HEK293 (cell line): ENCODE measurements at regions of chr1 and their contacts with region 1.

Region 1: DNA sequence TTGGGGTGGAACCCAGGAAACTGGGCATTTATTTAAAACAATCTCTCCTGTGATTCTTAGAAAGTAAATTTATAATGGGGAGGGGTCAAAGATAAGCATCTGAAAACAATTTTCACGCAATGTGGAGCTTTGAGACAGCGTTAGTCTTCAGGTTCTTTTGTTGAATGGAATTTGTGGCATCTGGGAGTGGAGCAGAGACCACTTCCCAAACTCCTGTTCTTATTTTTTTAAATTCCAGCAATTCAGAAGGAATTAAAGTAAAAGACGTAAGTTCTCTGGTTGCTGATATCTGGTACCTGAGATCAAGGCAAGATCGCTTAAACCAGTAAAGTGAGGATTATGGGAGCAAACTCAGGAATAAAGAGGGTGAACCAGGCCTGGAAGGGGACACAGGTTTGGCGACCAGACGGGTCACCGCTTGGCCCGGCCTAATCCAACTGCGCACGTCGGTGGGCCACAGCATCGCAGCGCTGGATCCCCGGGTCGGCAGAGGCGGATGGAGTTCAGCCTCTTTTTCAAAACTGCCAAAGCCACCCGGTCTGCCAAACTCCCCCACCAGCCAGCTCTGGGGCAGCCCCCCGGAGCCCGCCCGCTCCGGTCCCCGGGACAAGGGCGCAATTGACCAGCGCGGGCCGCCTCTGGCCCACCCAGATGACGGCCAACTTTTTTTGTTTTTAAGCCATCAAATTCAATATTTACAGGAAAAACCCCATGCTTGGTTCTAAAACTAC is 754 bp upstream of the PDPN start:
- H3K4me3 ChIP-seq: no peak overlapping the region
- H3K27ac ChIP-seq: no peak overlapping the region
- H3K4me1 ChIP-seq: peaks cover 4% of the 10 kb centered on the region
- CTCF ChIP-seq: no peak

Region 2: GRCh38 chr1:13570924-13571323 is 12.0 kb before region 1 on chr1:
- CTCF ChIA-PET with region 1: interaction called, 11 read pairs
- POLR2A ChIA-PET with region 1: no interaction called
- H3K4me3 ChIP-seq: no peak overlapping the region
- H3K27ac ChIP-seq: no peak overlapping the region
- H3K4me1 ChIP-seq: no peaks in the 10 kb centered on the region
- CTCF ChIP-seq: no peak